Right cardiac atrium (tissue), 5 donors: ENCODE measurements at regions of chr16 and their contacts with region 1.

Region 1: DNA sequence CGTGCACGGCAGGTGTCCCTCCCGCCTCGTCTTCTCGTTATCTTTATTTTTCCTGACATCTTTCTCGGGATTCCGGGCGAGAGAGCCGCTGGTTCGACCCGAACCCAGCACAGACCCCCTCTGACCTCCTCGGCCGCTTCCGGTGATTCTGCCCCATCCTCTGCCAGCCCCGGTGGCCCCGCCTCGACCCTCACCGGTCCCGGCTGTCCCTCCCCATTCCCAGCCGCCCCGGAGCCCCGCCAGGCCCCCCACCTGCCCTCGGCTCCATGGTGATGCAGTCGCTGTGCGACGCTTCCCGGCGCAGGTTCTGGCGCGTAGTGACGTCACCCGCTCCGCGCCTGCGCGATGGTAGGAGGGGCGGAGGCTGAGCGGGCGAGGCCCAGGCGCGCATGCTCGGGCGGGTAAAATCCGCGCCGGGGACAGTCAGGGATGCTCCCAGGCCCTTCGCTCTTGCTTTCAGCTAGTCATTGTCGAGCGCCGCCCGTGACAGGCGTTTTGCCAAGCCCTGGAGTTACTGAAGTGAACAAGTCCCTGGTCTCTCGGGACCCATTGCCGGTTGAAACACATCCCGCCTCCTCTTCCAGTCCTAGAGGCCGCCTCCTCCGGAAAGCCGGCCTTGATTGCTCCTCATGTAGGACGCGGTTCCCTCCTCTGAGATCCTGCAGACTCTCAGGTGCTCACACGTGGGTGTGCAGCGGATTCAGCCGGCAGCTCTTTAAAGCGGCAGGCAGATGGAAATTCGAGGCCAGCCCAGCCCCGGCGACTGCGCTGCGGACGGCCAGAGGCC is at the start of gene MTHFSD:
- DNase-seq: peak; percentile 95 to 98 (median 97)
- ATAC-seq: peak; percentile 97
- H3K4me3 ChIP-seq: peak within 1 kb of the TSS; percentile 71
- H3K27ac ChIP-seq: peak within 1 kb of the TSS; percentile 53
- H3K4me1 ChIP-seq: peaks cover 3% of the 10 kb centered on the region
- H3K27me3 ChIP-seq: no peaks in the 10 kb centered on the region
- total RNA-seq, gene MTHFSD: 9.0 to 14.7 (median 12.5) TPM

Region 2: DNA sequence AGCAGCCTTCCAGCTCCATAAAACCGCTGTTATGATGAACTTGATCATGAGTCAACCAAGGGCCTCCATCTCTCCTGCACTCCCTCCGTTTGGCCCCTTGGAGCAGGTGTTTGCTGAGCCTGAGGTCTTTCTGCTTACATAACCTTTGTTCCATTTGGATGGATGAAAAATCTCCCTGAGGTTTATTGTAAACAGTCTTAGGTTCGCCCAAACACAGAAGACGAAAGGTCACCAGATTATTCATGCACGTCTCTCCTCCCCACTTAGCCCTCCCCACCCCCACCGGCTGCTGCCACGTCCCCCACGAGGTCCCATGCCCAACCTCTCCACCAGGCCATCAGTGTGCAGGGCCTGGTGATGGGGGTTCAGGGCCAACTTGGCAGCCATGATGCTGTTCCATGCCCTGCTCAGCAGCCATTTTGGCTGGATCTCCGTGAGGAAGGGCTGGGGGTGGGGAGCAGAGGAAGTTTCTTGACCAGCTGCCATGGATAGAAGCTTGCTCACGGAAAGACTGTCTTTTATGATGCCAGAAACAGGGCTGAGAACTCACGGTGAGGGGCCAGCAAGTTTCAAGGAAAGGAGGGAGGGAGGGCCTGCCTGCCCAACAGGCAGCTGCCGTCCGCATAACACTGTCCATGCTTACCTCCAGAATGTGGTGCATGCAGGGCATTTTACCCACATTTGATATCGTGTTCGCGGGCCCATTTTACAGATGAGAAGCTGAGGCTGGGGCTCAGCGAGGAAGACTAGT is 92.6 kb before region 1 on chr16:
- intact Hi-C with region 1: no loop called
- DNase-seq: no peak
- ATAC-seq: no peak
- H3K4me3 ChIP-seq: no peak overlapping the region
- H3K27ac ChIP-seq: no peak overlapping the region
- H3K4me1 ChIP-seq: no peaks in the 10 kb centered on the region
- H3K27me3 ChIP-seq: no peaks in the 10 kb centered on the region

Region 3: DNA sequence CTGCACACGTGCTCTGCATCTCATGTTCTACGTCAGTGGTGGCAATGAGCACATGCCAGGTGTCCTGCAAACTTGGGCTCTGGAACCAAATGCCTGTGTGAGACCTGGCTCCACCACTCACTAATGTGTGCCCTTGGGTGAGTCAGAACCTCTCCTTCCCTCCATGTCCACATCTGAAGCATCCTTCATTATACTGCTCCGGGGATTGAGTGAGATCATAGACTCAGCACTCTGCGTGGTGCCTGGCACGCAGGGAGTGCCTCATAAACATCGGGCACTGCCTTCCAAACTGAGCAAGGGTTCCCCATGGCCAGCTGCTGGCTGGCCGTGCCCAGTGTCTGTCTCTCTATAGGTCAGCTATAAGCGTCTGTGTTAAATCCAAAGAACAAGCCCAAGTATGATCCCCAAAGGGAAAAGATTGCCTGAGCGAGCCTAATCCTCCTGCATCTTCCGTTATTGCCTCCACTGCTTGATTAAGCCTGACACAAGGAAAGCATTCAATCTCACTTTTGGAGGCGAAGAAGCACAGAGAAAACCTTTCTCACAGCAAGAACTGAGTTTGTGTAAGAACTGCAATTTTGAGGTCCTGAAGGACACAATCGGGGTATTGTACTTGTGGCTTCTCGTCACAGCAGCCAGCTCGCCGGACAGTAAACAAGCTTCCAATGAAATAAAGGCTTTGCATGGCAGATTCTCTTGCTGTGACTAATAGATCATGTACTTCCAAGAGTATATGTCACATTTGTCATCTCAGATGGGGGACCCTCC is 63.7 kb before region 1 on chr16:
- intact Hi-C with region 1: no loop called
- DNase-seq: no peak
- ATAC-seq: no peak
- H3K4me3 ChIP-seq: no peak overlapping the region
- H3K27ac ChIP-seq: no peak overlapping the region
- H3K4me1 ChIP-seq: no peaks in the 10 kb centered on the region
- H3K27me3 ChIP-seq: peaks cover 4% of the 10 kb centered on the region

Region 4: DNA sequence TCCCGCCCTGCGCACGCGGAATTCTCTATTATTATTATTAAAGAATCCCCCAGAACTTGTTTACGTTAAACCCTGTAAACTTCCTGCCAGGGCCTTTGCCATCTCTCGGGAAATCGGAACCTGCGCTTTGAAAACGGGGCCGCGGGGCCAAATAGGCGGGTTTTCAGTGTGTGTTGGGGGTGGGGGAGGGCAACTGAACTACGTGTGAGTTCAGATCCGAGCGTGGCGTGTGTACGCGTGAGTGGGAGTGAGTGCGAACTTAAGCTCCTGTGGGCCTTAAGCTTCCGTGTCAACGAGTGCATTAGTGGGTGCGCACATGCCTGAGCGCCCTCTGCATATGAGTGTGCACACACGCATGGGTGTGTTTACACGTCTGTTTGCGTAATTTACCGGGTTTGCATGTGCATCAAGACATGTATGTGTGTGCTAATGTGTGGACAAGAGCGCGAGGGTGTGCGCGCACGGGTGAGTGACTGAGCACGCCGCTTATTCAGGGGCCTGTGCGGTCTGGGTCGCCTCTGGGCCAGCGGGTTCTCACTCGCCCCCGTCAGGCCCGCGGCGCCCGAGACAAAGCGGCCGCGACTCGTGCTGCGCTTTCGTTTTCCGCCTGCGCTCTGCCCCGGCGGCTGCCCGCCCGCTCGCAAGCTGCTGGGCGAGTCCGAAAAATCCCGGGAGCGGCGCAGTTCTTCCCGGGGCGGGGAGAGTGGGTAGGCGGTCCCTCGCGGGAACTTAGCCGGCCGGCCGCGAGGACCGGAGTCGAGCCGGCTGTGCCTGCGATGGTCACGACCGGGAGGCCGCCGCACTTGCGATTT is 46.0 kb before region 1 on chr16:
- intact Hi-C with region 1: no loop called
- DNase-seq: peak; percentile 67 to 82 (median 74)
- ATAC-seq: peak; percentile 66 to 67
- H3K4me3 ChIP-seq: peak overlapping the region; percentile 68
- H3K27ac ChIP-seq: no peak overlapping the region
- H3K4me1 ChIP-seq: no peaks in the 10 kb centered on the region
- H3K27me3 ChIP-seq: no peaks in the 10 kb centered on the region

Region 5: GRCh38 chr16:86519649-86520316 is 35.3 kb before region 1 on chr16:
- intact Hi-C with region 1: no loop called
- DNase-seq: peak; percentile 62 to 85 (median 82)
- ATAC-seq: peak in 1 of 2 donors; percentile 53
- H3K4me3 ChIP-seq: no peak overlapping the region
- H3K27ac ChIP-seq: no peak overlapping the region
- H3K4me1 ChIP-seq: no peaks in the 10 kb centered on the region
- H3K27me3 ChIP-seq: no peaks in the 10 kb centered on the region

Region 6: DNA sequence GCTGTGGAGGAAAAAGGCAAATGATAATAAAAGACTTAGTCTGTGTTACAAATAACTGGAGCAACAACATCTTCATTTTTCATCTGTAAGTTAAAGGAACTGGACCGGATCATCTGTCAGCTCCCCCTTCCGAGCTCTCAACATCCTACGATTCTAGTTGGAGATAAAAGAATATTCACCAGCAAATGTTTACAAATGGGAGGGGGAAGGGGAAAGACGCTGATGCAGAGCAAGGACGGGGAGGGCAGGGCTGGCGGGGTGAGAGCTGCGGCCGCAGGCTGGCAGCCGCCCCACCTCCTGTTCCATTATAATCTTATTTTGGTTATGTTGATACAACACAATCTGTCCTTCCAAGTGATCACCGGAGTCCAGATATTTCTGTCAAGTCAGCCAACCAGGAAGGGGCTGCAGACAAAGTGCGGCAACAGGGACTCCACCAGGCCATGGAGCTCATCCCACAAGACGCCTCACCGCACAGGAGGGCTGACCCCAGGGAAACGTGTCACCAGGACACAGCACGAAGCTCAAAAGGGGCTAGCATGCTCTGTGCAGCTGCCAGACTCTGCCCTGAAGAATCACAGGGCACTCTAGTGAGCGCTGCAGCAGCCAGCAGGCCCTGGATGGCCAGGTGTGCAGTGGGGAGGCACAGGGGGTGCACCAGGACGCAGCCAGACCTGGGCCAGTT is 808.8 kb after region 1 on chr16:
- intact Hi-C with region 1: loop called in 1 of 4 experiments (anchors 10 kb)
- DNase-seq: peak in 2 of 3 donors; percentile 76 to 81
- ATAC-seq: peak; percentile 66 to 77
- H3K4me3 ChIP-seq: no peak overlapping the region
- H3K27ac ChIP-seq: peak overlapping the region; percentile 84
- H3K4me1 ChIP-seq: peaks cover 9% of the 10 kb centered on the region
- H3K27me3 ChIP-seq: no peaks in the 10 kb centered on the region